GM13977 (cell line): ENCODE measurements at regions of chrX and their contacts with region 1.

Region 1: GRCh38 chrX:11908371-11908770 is 150.3 kb downstream of the MSL3 start:
- DNase-seq: peak; percentile 20
- CTCF ChIP-seq: peak; percentile 55

Region 2: GRCh38 chrX:11533211-11533651 is 375.1 kb before region 1 on chrX:
- in situ Hi-C with region 1: loop called (anchors 25 kb)
- DNase-seq: peak; percentile 56
- CTCF ChIP-seq: peak; percentile 66

Region 3: GRCh38 chrX:11724122-11725017 is 184.0 kb before region 1 on chrX:
- in situ Hi-C with region 1: no loop called
- DNase-seq: peak; percentile 40
- CTCF ChIP-seq: peak; percentile 70

Region 4: DNA sequence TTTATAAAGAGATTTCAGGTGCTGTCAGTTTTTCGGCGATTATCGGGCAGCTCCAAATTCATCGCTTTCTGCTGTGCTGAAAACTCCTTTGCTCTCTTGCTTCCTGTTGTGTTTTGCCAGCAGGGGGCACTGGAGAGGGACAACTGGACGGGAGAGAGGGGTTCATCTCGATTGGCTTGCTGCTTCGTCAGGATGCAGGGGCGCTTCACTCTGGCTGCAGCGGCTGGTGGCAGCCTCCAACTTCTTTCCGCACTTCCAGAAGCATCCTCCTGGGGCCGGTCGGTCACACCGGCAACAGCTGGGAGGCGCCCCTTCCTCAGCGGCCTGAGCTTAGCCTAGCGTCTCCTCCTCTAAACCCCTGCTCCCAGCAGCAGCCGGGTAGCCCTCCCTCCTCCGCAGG is 120.8 kb before region 1 on chrX:
- in situ Hi-C with region 1: loop called (anchors 25 kb)
- DNase-seq: no peak
- CTCF ChIP-seq: peak; percentile 37